H1 (cell line): ENCODE measurements at regions of chr12 and their contacts with region 1.

Region 1: DNA sequence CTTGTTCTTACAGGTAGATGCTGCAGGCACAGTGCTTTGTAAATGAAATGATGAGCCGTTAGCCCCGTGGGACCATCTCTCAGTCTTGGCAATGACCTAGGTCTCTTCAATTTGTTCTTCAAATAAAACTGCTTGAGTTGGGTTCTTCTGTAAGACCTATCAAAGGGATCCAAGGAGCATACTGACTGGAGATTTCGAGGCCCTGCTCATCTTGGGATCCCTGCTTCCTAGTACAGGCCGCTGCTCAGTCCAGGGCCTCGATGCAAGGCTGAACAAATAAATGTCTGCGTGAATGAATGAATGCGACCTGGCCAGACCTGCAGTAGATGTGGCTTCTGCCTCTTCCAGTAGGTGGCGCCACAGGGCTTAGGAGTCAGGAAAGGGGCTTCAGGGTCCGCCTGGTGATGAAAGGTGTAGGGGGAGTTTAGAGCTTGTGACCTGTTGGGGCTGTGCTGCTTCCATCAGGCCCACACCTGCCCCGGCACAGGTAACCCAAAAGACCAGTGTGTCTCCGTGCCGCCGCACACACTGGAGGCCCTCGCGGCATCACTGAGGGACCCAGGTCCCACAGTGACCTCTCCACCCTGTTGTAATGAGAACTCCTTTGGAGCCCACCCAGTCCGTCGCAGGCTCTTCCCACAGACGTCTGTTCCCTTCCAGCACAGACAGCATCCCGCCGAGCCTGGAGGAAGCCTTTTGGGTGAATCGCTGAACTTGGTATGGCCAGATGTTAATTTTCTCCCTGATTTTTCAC is 4.4 kb downstream of the CACNA1C start:
- DNase-seq: peak; percentile 73 to 99
- H3K4me3 ChIP-seq: no peak overlapping the region
- H3K27ac ChIP-seq: no peak overlapping the region
- H3K4me1 ChIP-seq: peaks cover 0 to 15% (median 4%) of the 10 kb centered on the region in 4 experiments; a peak in 5 of 7 replicates
- H3K27me3 ChIP-seq: peaks cover 12 to 36% (median 26%) of the 10 kb centered on the region in 4 experiments
- CTCF ChIP-seq: peak; percentile 96 to 98 (median 97)
- EP300 ChIP-seq: no peak
- POLR2A ChIP-seq: no peak
- RAD21 ChIP-seq: peak; percentile 99

Region 2: GRCh38 chr12:2039034-2039433 is 18.2 kb before region 1 on chr12:
- CTCF ChIA-PET with region 1: no interaction called
- POLR2A ChIA-PET with region 1: no interaction called
- DNase-seq: no peak
- H3K4me3 ChIP-seq: no peak overlapping the region
- H3K27ac ChIP-seq: no peak overlapping the region
- H3K4me1 ChIP-seq: peaks cover 0 to 3% (median 1%) of the 10 kb centered on the region in 4 experiments; a peak in 2 of 7 replicates
- H3K27me3 ChIP-seq: peaks cover 0 to 13% (median 12%) of the 10 kb centered on the region in 4 experiments; a peak in 6 of 7 replicates
- CTCF ChIP-seq: no peak
- EP300 ChIP-seq: no peak
- POLR2A ChIP-seq: no peak
- RAD21 ChIP-seq: no peak

Region 3: GRCh38 chr12:2068653-2069052 is 11.4 kb after region 1 on chr12:
- CTCF ChIA-PET with region 1: interaction called, 33 read pairs
- POLR2A ChIA-PET with region 1: no interaction called
- DNase-seq: no peak
- H3K4me3 ChIP-seq: no peak overlapping the region
- H3K27ac ChIP-seq: no peak overlapping the region
- H3K4me1 ChIP-seq: no peaks in the 10 kb centered on the region
- H3K27me3 ChIP-seq: no peaks in the 10 kb centered on the region
- CTCF ChIP-seq: no peak
- EP300 ChIP-seq: no peak
- POLR2A ChIP-seq: no peak
- RAD21 ChIP-seq: no peak

Region 4: DNA sequence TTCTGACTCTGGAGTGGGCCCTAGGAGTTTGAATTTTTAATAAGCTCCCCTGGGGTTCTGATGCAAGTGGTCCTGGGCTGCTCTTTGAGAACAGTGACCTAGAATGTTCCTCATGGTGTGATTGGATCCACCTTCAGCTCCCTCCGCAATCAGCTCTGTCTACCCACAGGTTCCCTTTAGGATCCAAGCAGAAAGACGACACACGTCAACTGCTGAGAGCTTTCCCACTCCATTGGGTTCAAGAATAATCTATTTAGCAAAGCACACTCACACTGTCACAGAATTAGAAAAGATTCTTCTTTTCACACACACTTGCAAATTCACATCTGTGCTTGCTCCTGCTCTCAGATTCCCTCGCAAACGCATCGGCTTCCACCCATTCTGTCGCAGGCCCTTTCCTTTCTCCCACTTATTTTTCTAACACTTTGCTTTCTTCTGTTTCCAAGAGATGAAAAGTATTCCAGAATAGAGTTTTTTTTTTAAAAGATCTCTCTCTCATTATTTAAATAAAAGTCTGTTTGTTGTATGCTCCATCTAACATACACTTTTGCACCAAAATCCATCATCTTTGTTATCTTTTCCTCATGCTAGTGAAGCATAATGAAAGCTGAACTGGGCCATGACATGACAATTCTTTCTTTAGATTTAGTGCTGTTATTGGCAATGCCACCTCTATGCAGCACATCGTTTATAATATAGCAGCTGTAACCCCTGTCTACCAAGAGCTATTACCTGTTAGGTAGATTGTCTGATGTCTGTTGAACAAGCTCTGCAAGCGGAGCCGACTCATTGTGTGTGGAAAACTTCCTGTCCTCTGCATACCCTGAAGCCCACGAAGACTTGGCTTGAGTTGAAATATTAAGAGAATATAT is 68.7 kb after region 1 on chr12:
- CTCF ChIA-PET with region 1: interaction called, 19 read pairs
- POLR2A ChIA-PET with region 1: no interaction called
- DNase-seq: no peak
- H3K4me3 ChIP-seq: no peak overlapping the region
- H3K27ac ChIP-seq: no peak overlapping the region
- H3K4me1 ChIP-seq: 0 out of 7 replicates have a peak, but pooled peaks cover 0 to 1% (median 0%) of the 10 kb centered on the region in 4 experiments
- H3K27me3 ChIP-seq: peaks cover 0 to 1% (median 0%) of the 10 kb centered on the region in 4 experiments; a peak in 1 of 7 replicates
- CTCF ChIP-seq: no peak
- EP300 ChIP-seq: no peak
- POLR2A ChIP-seq: no peak
- RAD21 ChIP-seq: no peak

Region 5: DNA sequence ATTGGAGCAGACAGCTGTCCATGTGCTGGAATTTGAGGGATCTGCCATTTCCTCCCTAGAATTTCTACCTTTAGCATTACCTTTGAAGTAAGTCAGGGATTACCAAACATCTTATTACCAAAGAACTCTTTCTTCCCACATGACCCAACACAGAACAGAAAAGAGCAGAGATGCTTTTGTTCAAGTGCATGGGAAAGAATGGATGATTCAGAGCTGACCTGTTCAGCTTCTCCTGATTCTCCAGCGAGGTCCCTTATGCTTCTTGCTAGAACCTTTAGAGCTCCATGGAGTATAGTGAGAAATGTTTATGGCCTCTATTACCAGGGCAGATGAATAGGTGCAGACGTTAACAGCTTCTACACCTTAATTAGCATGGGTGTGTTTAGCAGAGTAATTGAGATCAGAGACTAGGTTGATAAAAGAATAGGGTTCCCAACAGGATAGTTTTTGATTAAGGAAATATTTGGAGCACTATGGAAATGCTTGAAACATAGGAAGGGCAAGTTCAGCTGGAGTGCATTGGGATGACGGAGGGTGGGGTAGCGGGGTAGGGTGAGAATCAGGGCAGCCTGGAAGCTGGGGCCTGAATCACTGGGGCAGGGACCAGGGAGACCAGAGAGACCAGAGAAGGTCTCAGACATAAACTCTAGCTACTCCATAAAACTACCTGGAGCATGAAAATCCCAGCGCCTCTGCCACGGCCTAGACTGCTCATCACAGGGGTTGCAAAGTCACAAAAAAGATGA is 219.2 kb after region 1 on chr12:
- CTCF ChIA-PET with region 1: interaction called, 252 read pairs
- POLR2A ChIA-PET with region 1: no interaction called
- DNase-seq: no peak
- H3K4me3 ChIP-seq: no peak overlapping the region
- H3K27ac ChIP-seq: no peak overlapping the region
- H3K4me1 ChIP-seq: no peaks in the 10 kb centered on the region
- H3K27me3 ChIP-seq: no peaks in the 10 kb centered on the region
- CTCF ChIP-seq: no peak
- EP300 ChIP-seq: no peak
- POLR2A ChIP-seq: no peak
- RAD21 ChIP-seq: no peak

Region 6: DNA sequence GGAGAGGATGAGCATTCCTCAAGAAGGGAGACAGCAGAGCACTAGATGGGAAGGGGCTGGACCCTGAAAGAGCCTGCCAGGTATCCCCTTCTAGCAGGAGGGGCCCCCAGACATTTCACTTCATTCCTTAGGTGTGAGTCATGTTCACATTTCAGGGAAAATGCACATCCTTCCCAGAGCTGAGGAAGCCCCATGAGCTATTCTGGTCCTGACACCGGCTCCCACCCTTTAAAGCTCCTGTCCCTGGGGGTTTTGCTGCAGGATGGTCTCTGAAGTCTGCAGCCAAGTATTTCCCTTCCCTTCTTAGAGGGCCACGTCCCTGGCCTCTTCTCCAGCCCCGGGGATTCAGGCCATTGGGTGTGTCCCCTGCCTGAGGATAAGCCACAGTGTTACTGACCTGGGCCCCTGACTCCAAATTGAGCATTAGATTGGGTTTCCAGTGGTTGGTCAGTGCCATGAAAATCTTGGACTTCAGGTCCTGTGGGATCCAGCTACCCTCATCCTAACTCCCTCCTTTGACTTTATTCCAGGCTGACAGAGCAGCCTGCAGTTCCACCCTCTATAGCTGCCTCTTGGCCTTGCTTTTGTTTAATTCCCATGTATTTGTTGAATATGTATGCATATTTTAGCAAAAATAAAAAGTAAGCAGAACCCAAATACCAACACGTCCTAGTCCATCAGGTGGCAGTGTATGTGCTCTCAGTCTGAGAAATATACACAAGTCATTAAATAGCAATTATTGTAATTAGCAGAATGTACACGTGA is 262.7 kb after region 1 on chr12:
- CTCF ChIA-PET with region 1: interaction called, 10 read pairs
- POLR2A ChIA-PET with region 1: no interaction called
- DNase-seq: no peak
- H3K4me3 ChIP-seq: no peak overlapping the region
- H3K27ac ChIP-seq: no peak overlapping the region
- H3K4me1 ChIP-seq: peaks cover 0 to 2% (median 0%) of the 10 kb centered on the region in 4 experiments; a peak in 1 of 7 replicates
- H3K27me3 ChIP-seq: no peaks in the 10 kb centered on the region
- CTCF ChIP-seq: no peak
- EP300 ChIP-seq: no peak
- POLR2A ChIP-seq: no peak
- RAD21 ChIP-seq: no peak

Region 7: DNA sequence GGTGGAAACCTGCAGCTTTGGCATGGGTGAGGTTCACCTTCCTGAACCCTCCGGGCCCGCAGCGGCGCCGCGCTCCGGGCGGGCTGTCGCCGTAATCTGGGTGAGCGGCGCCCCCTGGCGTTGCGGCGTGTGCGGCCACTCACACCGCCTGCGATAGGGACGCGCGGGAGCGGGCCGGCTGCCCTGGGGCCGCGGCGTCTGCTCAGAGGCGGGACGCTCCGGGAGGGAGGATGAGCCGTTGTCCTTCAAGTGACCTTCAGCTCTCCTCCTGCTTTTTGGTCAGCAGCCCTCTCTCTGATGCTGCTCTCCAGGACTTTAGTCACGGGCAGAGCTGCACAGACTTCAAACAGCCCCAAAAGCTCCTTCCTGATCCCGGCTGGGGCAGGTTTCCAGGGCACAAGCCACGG is 525.9 kb after region 1 on chr12:
- CTCF ChIA-PET with region 1: interaction called, 23 read pairs
- POLR2A ChIA-PET with region 1: no interaction called
- DNase-seq: peak; percentile 23 to 89
- H3K4me3 ChIP-seq: peak overlapping the region in 1 of 4 experiments; percentile 40; a peak in 1 of 8 replicates
- H3K27ac ChIP-seq: no peak overlapping the region
- H3K4me1 ChIP-seq: peaks cover 0 to 3% (median 2%) of the 10 kb centered on the region in 4 experiments; a peak in 5 of 7 replicates
- H3K27me3 ChIP-seq: peaks cover 0 to 9% (median 9%) of the 10 kb centered on the region in 4 experiments; a peak in 6 of 7 replicates
- CTCF ChIP-seq: peak; percentile 81 to 94 (median 89)
- EP300 ChIP-seq: no peak
- POLR2A ChIP-seq: no peak
- RAD21 ChIP-seq: peak; percentile 93 to 97